Aorta (tissue), 5 donors: ENCODE measurements at regions of chr3 and their contacts with region 1.

Region 1: GRCh38 chr3:174949526-174949925 is 90.4 kb downstream of the NAALADL2 start:
- DNase-seq: no peak
- ATAC-seq: peak; percentile 60
- H3K4me3 ChIP-seq: no peak overlapping the region
- H3K27ac ChIP-seq: no peak overlapping the region
- H3K4me1 ChIP-seq: no peaks in the 10 kb centered on the region
- H3K27me3 ChIP-seq: no peaks in the 10 kb centered on the region

Region 2: DNA sequence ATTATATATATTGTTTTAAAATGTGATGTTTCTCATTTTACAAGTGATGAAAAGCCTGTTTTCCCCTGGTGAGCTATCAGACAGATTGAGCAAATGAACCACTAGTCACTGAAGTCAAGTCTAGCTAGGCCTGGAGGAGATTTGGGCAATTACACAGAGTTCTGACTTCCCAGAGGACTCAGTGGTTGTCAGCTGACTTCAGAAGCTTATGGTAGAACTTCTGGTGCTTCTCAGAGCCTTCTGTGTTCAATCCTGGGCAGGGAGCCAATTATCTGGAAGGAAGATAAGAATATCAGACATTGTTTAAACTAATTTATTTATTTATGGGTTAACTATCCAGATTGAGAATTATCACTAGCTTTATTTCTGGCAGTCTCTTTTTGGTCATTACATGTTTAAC is 128.0 kb before region 1 on chr3:
- intact Hi-C with region 1: loop called in 1 of 2 experiments (anchors 5 kb)
- DNase-seq: no peak
- ATAC-seq: no peak
- H3K4me3 ChIP-seq: no peak overlapping the region
- H3K27ac ChIP-seq: peak overlapping the region; percentile 57 to 72
- H3K4me1 ChIP-seq: no peaks in the 10 kb centered on the region
- H3K27me3 ChIP-seq: no peaks in the 10 kb centered on the region

Region 3: GRCh38 chr3:174862143-174862542 is 87.4 kb before region 1 on chr3:
- intact Hi-C with region 1: loop called in 1 of 2 experiments (anchors 10 kb)
- DNase-seq: no peak
- ATAC-seq: no peak
- H3K4me3 ChIP-seq: no peak overlapping the region
- H3K27ac ChIP-seq: peak overlapping the region; percentile 57 to 71
- H3K4me1 ChIP-seq: peaks cover 0 to 8% of the 10 kb centered on the region in 2 donors
- H3K27me3 ChIP-seq: no peaks in the 10 kb centered on the region

Region 4: GRCh38 chr3:175039875-175040274 is 90.3 kb after region 1 on chr3:
- intact Hi-C with region 1: no loop called
- DNase-seq: no peak
- ATAC-seq: no peak
- H3K4me3 ChIP-seq: no peak overlapping the region
- H3K27ac ChIP-seq: no peak overlapping the region
- H3K4me1 ChIP-seq: no peaks in the 10 kb centered on the region
- H3K27me3 ChIP-seq: no peaks in the 10 kb centered on the region